ENCODE measurements at regions of chr1 and their contacts with region 1.

Region 1: DNA sequence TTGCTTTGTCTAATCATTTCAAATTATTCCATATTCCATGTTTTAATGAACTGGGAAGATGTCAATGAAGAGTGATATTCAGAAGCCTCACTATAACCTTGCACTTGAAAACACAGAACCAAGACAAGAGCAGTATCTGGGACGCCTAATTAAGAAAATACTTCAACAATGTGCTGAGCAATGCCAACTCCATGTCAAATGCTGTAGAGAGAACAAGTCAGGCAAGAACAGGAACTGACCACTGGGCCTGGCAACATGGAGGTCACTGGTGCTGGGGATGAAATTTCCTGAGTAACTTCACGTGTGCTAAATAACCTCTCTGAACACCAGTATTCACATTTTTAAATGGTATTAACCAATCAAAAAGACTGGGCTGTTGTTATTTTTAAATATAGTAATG is 22.8 kb downstream of the HEATR1 start:
- DNase-seq: no peak
- ATAC-seq: no peak
- H3K4me3 ChIP-seq: no peak overlapping the region
- H3K27ac ChIP-seq: no peak overlapping the region
- H3K4me1 ChIP-seq: no peaks in the 10 kb centered on the region
- H3K27me3 ChIP-seq: no peaks in the 10 kb centered on the region
- CTCF ChIP-seq: no peak

Region 2: GRCh38 chr1:236403905-236404696 is 177.4 kb before region 1 on chr1:
- CTCF ChIA-PET with region 1: no interaction called
- POLR2A ChIA-PET with region 1: no interaction called
- intact Hi-C with region 1: no loop called
- DNase-seq: no peak
- ATAC-seq: no peak
- H3K4me3 ChIP-seq: no peak overlapping the region
- H3K27ac ChIP-seq: no peak overlapping the region
- H3K4me1 ChIP-seq: no peaks in the 10 kb centered on the region
- H3K27me3 ChIP-seq: peaks cover 13% of the 10 kb centered on the region; the same call in 1 of the 2 replicates
- CTCF ChIP-seq: no peak

Region 3: GRCh38 chr1:236534151-236534651 is 47.3 kb before region 1 on chr1:
- CTCF ChIA-PET with region 1: no interaction called
- POLR2A ChIA-PET with region 1: no interaction called
- intact Hi-C with region 1: no loop called
- DNase-seq: peak; percentile 36
- ATAC-seq: peak; percentile 25; the same call in 1 of the 2 replicates
- H3K4me3 ChIP-seq: no peak overlapping the region
- H3K27ac ChIP-seq: no peak overlapping the region
- H3K4me1 ChIP-seq: peaks cover 18% of the 10 kb centered on the region
- H3K27me3 ChIP-seq: no peaks in the 10 kb centered on the region
- CTCF ChIP-seq: no peak

Region 4: DNA sequence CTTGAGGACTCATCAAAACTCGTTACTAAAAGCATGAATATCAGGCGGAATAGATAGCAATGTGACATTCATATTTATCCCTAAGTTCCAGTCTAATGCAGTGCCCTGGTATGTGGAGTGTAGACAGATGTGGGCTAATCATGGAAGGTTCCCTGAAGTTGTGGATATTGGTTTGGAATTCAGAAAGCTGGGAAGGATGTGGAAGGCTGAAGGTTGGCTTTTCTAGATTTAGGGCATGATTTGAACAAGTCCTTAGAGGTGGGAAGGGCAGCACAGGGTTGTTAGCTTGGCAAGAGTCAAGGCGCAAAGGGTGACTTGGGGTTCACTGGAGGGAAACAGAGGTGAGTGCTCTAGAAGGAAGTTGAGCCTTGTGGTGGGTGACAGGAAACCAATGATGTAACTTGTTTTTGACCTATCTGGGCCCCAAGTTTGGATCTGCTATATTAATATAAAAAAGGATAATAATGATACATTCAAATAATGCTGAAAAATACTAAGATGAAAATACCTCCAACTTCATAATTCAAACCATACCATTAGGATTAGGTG is 35.8 kb before region 1 on chr1:
- CTCF ChIA-PET with region 1: no interaction called
- POLR2A ChIA-PET with region 1: no interaction called
- intact Hi-C with region 1: loop called (anchors 5 kb)
- DNase-seq: no peak
- ATAC-seq: no peak
- H3K4me3 ChIP-seq: no peak overlapping the region
- H3K27ac ChIP-seq: no peak overlapping the region
- H3K4me1 ChIP-seq: no peaks in the 10 kb centered on the region
- H3K27me3 ChIP-seq: no peaks in the 10 kb centered on the region
- CTCF ChIP-seq: no peak